BJ (cell line): ENCODE measurements at regions of chr2 and their contacts with region 1.

Region 1: DNA sequence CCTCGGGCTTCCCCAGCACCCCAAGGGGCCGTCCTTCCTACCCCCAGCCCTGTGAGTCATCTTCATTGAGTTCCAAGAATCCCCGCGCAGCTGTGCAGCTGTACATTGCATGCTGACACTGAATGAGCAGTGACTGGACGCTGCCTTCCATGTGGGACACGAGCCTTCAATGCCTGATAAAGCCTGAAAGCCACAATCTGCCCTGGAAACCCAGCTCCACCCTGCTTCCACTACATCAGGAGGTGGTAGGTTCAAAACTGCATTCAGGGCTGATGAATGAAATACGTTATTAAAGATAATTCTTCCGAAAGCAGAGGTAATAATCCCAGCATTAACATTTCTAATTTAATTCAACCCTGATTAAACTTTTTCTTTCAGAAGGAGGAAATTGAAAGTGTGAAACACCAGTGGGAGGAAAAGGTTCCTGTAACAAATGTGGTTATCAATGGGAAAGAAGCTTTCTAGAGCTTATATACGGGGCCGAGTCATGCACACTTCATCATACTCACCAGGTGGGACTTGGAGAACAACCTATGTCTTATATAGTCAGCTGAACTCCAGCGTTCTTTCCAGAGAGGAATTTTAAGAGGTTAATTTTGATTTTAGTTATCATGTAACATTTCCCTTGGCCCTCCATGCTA is 360.1 kb downstream of the LPIN1 start:
- DNase-seq: peak; percentile 86
- H3K4me3 ChIP-seq: no peak overlapping the region
- H3K27me3 ChIP-seq: no peaks in the 10 kb centered on the region
- CTCF ChIP-seq: no peak

Region 2: DNA sequence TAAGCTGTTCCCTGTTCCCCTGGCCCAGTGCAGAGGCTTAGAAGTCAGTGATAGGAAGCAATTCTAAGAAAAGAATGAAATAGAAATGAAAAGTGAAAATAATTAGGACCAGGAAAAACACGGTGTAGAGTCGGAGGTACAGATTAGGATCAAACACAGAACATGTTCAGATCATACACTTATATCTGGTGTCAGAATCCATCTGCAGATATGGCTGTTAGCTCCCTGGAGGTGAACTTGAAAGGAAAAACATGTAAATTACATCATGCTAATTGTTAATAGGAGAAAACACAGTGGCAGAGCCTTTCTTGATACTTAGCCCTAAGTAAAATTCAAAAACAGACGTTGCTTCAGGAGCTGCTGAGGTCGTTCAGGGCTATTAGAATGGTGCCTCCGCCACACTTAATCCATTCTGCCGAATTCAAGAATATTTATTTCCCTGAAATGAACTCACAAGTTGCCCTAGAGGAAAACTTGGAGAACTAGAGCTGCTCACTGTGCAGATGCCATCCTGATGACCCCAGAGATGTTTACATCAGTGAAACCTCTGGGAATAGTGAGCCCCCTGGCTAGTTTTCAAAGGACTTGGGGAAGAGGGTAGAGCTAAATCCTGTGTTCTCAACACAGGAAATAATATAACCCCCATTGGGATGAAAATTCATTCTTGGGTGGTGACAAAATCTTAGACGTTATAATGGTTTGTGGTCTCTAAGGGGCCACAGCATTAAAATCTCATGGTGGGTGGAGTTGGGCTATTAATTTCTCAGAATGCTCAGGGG is 332.6 kb before region 1 on chr2:
- CTCF ChIA-PET with region 1: no interaction called
- POLR2A ChIA-PET with region 1: interaction called, 10 read pairs
- DNase-seq: no peak
- H3K4me3 ChIP-seq: no peak overlapping the region
- H3K27me3 ChIP-seq: no peaks in the 10 kb centered on the region
- CTCF ChIP-seq: no peak

Region 3: DNA sequence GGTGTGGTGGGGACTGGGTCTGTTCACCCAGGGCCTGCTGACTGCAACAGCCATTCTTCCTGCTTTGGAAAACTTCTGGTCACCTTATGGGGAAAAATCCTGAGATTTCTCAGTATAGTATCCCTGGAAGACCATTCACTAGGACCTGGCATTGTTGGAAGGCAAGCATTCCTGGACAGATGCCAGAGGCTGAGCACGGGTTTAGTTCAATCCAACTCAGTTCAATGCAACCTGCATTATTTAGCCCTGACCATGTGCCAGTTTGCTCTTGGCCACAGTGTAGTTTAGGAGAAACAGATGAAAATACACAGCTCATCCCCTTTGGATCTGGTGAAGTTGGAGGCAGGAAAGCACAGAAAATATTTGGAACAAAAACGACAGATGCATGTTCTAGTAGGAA is 264.2 kb before region 1 on chr2:
- CTCF ChIA-PET with region 1: no interaction called
- POLR2A ChIA-PET with region 1: interaction called, 12 read pairs
- DNase-seq: no peak
- H3K4me3 ChIP-seq: no peak overlapping the region
- H3K27me3 ChIP-seq: peaks cover 2% of the 10 kb centered on the region
- CTCF ChIP-seq: no peak

Region 4: GRCh38 chr2:12227941-12228608 is 121.5 kb after region 1 on chr2:
- CTCF ChIA-PET with region 1: no interaction called
- POLR2A ChIA-PET with region 1: no interaction called
- DNase-seq: no peak
- H3K4me3 ChIP-seq: no peak overlapping the region
- H3K27me3 ChIP-seq: no peaks in the 10 kb centered on the region
- CTCF ChIP-seq: no peak